ENCODE measurements at regions of chr11 and their contacts with region 1.

Region 1: GRCh38 chr11:35272391-35272902 is 133.5 kb downstream of the CD44 start:
- DNase-seq: peak; percentile 51 to 68 (median 66)
- H3K4me3 ChIP-seq: peak overlapping the region in 1 of 3 experiments; percentile 20
- H3K4me3 Mint-ChIP-seq: peak overlapping the region in 1 of 2 donors; percentile 67
- H3K27ac ChIP-seq: peak overlapping the region; percentile 39 to 75
- H3K27ac Mint-ChIP-seq: peak overlapping the region; percentile 46 to 91 (median 81)
- H3K4me1 ChIP-seq: peaks cover 18 to 25% of the 10 kb centered on the region in 2 donors
- H3K4me1 Mint-ChIP-seq: peaks cover 35% of the 10 kb centered on the region
- H3K27me3 ChIP-seq: no peaks in the 10 kb centered on the region
- H3K27me3 Mint-ChIP-seq: no peaks in the 10 kb centered on the region
- CTCF ChIP-seq: no peak

Region 2: DNA sequence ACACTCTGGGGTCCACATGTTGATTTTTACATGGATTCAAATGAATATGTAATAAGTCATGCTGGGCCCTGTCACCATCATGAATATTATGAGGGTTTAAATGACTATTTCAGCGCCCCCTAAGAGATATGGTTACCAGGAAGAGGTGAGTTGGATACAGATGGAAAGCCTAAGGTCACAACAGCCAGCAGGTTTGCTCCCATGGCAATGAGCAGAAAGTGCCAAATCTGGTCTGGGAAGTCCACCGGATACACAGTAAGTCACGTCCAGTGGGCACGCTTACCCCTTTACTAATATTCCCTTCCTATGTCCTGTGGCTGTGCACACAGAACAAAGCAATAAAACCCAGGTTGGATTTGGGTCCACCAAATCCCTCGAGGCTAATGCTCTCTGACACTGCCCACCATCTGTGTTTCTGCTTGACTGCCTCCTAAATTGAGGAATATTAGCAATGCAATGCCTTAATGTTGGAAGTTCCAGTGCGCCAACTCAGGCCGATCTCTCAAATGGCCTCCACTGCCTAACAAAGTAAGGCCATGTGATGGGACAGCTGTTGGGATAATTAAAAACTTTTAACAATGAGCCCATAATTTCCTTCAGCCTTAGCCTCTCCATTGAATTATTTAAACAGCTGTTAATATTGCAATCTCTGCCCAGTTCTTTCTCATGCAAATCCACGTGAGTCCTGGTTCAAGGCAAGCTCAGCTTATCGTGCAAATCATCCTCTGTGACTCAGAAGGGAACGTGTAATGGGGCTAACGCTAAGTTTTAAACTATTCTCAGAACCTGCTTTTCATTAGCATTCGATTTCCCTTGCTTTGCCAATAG is 49.3 kb after region 1 on chr11:
- intact Hi-C with region 1: no loop called
- DNase-seq: no peak
- H3K4me3 ChIP-seq: no peak overlapping the region
- H3K4me3 Mint-ChIP-seq: no peak overlapping the region
- H3K27ac ChIP-seq: no peak overlapping the region
- H3K27ac Mint-ChIP-seq: no peak overlapping the region
- H3K4me1 ChIP-seq: peaks cover 17 to 18% of the 10 kb centered on the region in 2 donors
- H3K4me1 Mint-ChIP-seq: peaks cover 16% of the 10 kb centered on the region
- H3K27me3 ChIP-seq: no peaks in the 10 kb centered on the region
- H3K27me3 Mint-ChIP-seq: peaks cover 0 to 2% (median 1%) of the 10 kb centered on the region in 3 donors
- CTCF ChIP-seq: no peak

Region 3: GRCh38 chr11:35363854-35364780 is 91.7 kb after region 1 on chr11:
- intact Hi-C with region 1: loop called in 1 of 2 experiments (anchors 10 kb)
- DNase-seq: peak in 1 of 3 donors; percentile 28
- H3K4me3 ChIP-seq: no peak overlapping the region
- H3K4me3 Mint-ChIP-seq: no peak overlapping the region
- H3K27ac ChIP-seq: no peak overlapping the region
- H3K27ac Mint-ChIP-seq: peak overlapping the region in 1 of 7 donors; percentile 68
- H3K4me1 ChIP-seq: no peaks in the 10 kb centered on the region
- H3K4me1 Mint-ChIP-seq: peaks cover 4% of the 10 kb centered on the region
- H3K27me3 ChIP-seq: no peaks in the 10 kb centered on the region
- H3K27me3 Mint-ChIP-seq: peaks cover 0 to 3% (median 1%) of the 10 kb centered on the region in 3 donors
- CTCF ChIP-seq: no peak